HAP-1 (cell line): ENCODE measurements at regions of chr1 and their contacts with region 1.

Region 1: GRCh38 chr1:159936273-159936904 is 9.0 kb downstream of the IGSF9 start:
- DNase-seq: peak; percentile 46 to 90
- H3K4me3 ChIP-seq: no peak overlapping the region
- H3K4me1 ChIP-seq: peaks cover 12% of the 10 kb centered on the region
- H3K27me3 ChIP-seq: no peaks in the 10 kb centered on the region

Region 2: DNA sequence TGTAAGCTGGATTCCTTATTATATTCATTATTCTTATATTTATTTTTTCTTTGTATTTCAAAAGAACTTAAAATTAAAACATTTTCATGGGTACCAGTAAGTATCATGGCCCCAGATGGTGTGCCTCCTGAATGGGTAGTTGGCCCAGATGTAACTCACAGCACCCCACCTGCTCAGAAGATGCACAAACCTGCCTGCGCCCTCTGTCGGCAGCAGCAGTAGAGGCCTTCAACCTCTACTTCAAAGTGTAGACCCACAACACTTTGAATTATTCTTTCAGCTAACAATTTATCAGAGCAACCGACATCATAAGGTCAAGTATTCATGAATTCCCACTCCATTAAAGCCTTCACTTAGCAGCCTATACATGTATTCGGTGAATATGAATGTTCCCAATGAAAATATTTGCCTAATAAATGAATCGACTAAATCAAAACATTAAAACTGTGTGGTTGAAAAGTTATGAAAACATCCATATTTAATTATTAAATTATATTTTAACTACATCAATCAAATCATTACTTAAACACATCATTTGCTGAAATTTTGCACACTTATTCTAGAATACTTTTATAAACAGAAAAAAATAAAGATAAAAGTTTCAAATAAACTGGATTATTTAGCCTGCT is 70.0 kb after region 1 on chr1:
- in situ Hi-C with region 1: loop called (anchors 5 kb)
- DNase-seq: peak; percentile 54 to 83
- H3K4me3 ChIP-seq: no peak overlapping the region
- H3K4me1 ChIP-seq: peaks cover 15% of the 10 kb centered on the region
- H3K27me3 ChIP-seq: no peaks in the 10 kb centered on the region

Region 3: DNA sequence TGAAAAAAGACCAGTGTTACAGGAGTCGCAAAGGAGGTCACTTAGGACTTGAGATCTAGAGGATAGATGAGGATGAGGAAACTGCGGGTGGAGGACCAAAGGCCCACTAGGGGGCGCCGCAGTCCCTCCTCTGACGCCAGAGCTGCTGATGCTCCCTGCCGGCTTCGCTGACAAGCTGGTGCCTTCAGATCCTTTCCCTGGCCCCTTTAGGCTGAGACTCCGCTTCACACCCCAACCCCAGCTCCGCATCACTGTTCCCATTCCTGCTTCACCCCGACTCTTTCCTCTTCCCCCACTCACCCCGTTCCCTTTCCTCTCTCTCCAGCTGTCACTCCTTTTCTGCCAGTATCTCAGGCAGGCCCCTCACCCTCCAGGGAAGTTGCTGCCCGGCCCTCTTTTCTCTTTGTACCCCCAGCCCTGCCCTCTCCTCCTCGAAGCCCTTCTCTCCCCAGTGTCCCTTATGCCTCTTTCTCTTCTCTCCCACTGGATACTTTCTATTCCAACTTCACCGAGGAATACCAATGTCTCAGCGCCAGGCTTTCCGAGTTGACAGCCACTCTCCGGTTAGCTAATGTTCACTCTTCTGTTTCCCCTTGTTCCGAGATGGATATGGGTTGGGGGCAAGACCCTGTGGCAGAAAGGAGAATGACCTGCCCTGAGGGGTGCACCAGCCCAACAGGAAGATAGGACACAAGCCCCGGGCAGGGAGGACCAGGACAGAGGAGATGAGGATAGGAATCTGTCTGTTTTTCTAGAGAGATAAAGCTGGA is 149.5 kb after region 1 on chr1:
- in situ Hi-C with region 1: loop called (anchors 10 kb)
- DNase-seq: peak; percentile 79 to 87
- H3K4me3 ChIP-seq: no peak overlapping the region
- H3K4me1 ChIP-seq: no peaks in the 10 kb centered on the region
- H3K27me3 ChIP-seq: peaks cover 20% of the 10 kb centered on the region